Activated B cell treated with CpG ODN at 0.5 μM for 24 hours (primary cell): ENCODE measurements at regions of chr2 and their contacts with region 1.

Region 1: GRCh38 chr2:226828191-226828590 is 7.7 kb upstream of the RHBDD1 start:
- DNase-seq: no peak
- ATAC-seq: no peak
- H3K4me3 Mint-ChIP-seq: no peak overlapping the region
- H3K27ac Mint-ChIP-seq: no peak overlapping the region
- H3K4me1 Mint-ChIP-seq: peaks cover 20% of the 10 kb centered on the region
- H3K27me3 Mint-ChIP-seq: no peaks in the 10 kb centered on the region
- CTCF ChIP-seq: no peak

Region 2: DNA sequence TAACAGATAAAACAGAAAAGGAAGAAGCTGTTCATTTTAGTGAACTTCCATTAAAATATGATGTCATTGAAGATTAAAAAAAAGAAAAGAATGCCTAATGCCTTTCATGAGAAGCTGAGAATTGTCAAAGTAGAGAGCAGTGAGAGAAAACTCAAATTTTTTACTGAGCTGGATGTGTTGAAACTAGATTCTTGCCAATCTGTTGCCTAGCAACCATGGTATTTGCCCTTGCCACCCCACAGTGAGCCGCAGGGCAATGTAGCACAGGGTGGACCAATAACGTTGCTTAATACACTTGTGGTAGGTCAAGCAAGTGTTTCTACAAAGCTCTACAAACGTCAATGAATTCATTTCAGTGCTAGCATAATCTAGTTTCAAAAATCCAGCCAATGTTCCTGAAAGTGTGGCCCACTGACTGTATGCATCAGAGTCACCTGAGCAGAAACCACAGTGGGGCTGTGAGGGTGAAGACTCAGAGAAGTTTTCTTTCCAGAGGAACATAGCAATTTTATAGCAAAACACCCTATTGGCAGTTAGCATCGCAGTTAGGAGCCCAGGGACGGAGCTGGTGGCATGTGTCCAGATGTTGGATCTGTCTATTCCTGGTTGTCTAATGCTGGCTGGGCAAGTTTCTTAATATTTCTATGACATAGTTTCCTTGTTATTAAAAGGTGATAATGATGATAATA is 1918.2 kb before region 1 on chr2:
- CTCF ChIA-PET with region 1: no interaction called
- POLR2A ChIA-PET with region 1: no interaction called
- intact Hi-C with region 1: no loop called
- DNase-seq: no peak
- ATAC-seq: peak; percentile 85
- H3K4me3 Mint-ChIP-seq: peak overlapping the region; percentile 30
- H3K27ac Mint-ChIP-seq: peak overlapping the region; percentile 82
- H3K4me1 Mint-ChIP-seq: peaks cover 46% of the 10 kb centered on the region
- H3K27me3 Mint-ChIP-seq: no peaks in the 10 kb centered on the region
- CTCF ChIP-seq: no peak

Region 3: GRCh38 chr2:226862623-226863022 is 34.4 kb after region 1 on chr2:
- CTCF ChIA-PET with region 1: no interaction called
- POLR2A ChIA-PET with region 1: no interaction called
- intact Hi-C with region 1: loop called (anchors 5 kb)
- DNase-seq: no peak
- ATAC-seq: peak; percentile 31
- H3K4me3 Mint-ChIP-seq: no peak overlapping the region
- H3K27ac Mint-ChIP-seq: peak overlapping the region; percentile 32
- H3K4me1 Mint-ChIP-seq: peaks cover 31% of the 10 kb centered on the region
- H3K27me3 Mint-ChIP-seq: no peaks in the 10 kb centered on the region
- CTCF ChIP-seq: no peak